Ascending aorta (tissue), 2 donors: ENCODE measurements at regions of chr20 and their contacts with region 1.

Region 1: GRCh38 chr20:17682103-17682888 is at the start of gene RRBP1:
- DNase-seq: peak; percentile 97 to 99
- H3K4me3 ChIP-seq: peak within 1 kb of the TSS; percentile 90 to 93
- H3K27ac ChIP-seq: peak within 1 kb of the TSS; percentile 95 to 97
- H3K4me1 ChIP-seq: peaks cover 4 to 12% of the 10 kb centered on the region in 2 donors
- H3K27me3 ChIP-seq: no peaks in the 10 kb centered on the region
- CTCF ChIP-seq: peak; percentile 60 to 77 (median 76)
- total RNA-seq, gene RRBP1: 101 TPM

Region 2: DNA sequence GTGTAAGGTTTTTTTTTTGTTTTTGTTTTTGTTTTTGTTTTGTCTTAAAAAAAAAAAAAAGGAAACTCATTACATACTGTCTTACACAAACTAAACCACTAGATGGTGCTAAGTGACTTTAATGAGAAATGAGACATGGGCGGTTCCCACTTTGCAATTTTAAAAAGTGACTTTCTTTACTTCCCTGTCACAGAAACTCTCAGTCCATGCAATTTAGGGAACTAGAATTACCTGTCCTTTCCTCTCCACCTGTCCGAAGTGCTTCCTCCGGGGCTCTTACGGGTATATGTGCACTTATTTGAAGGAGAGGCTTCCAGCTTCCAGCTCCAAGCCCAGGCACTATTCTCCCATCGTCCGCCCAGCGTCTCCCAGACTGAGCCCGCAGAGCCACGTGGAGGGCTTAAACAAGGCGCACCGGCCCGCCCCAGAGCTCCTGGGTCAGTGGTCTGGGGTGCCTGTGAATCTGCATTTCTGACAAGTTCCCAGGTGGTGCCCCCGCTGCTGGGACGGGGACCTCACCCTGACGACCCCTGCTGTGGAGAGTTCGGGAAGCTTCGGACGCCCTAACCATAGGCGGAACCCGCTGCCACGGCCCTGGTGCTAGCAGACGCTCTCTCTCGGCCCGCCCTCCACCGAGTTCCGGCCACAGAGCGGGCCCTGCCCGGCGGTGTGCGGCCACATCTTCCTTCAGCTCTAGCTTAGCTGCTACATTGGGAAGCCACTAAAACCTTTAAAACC is 177.2 kb before region 1 on chr20:
- intact Hi-C with region 1: loop called (anchors 5 kb)
- DNase-seq: no peak
- H3K4me3 ChIP-seq: peak overlapping the region; percentile 60 to 65
- H3K27ac ChIP-seq: no peak overlapping the region
- H3K4me1 ChIP-seq: peaks cover 0 to 6% of the 10 kb centered on the region in 2 donors
- H3K27me3 ChIP-seq: no peaks in the 10 kb centered on the region
- CTCF ChIP-seq: peak; percentile 30 to 76 (median 74)

Region 3: GRCh38 chr20:17699931-17700657 is 17.8 kb after region 1 on chr20 and contains the start of gene BANF2:
- intact Hi-C with region 1: no loop called
- DNase-seq: no peak
- H3K4me3 ChIP-seq: no peak within 1 kb of the TSS
- H3K27ac ChIP-seq: no peak within 1 kb of the TSS
- H3K4me1 ChIP-seq: no peaks in the 10 kb centered on the region
- H3K27me3 ChIP-seq: no peaks in the 10 kb centered on the region
- CTCF ChIP-seq: no peak
- total RNA-seq, gene BANF2: not detected

Region 4: GRCh38 chr20:17796091-17796563 is 113.8 kb after region 1 on chr20:
- intact Hi-C with region 1: loop called (anchors 5 kb)
- DNase-seq: peak; percentile 26 to 84
- H3K4me3 ChIP-seq: no peak overlapping the region
- H3K27ac ChIP-seq: peak overlapping the region; percentile 72 to 83
- H3K4me1 ChIP-seq: peaks cover 0 to 26% of the 10 kb centered on the region in 2 donors
- H3K27me3 ChIP-seq: no peaks in the 10 kb centered on the region
- CTCF ChIP-seq: no peak

Region 5: DNA sequence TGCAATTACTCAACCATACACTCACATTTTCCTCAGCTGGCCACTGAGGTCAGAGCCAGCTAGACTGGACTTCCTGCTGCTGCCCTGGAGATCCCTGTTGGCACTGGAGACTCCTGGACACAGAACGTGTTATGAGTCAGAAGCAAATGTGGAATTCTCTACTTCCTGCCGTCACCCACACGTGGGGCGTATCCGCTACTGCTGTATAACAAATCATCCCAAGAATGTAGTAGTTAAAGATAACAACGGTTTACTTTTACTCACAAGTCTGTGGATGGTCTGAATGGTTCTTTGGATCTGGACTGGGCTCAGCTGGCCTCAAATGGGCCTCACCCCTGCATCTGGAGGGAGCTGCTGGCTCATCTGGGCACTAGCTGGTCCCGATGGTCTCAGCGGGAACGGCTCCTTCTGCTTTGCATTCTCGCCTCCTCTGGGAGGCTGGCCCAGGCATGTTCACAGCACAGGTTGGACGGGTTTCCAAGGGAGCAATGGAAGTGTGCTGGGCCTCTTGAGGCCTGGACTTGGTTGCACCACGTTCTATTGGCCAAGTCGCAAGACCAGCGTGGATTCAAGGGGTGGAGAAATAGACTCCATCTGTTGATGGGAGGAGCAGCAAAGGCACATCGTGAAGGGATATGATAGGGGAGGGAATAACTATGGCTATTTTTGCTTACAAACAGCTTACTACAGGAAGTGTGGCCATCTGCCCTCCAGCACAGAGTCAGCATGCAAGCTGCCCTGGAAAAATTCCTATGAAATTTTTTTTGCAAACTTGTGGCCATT is 167.8 kb after region 1 on chr20:
- intact Hi-C with region 1: loop called (anchors 1 kb)
- DNase-seq: peak; percentile 78 to 97
- H3K4me3 ChIP-seq: peak overlapping the region in 1 of 2 donors; percentile 8
- H3K27ac ChIP-seq: peak overlapping the region; percentile 90 to 93
- H3K4me1 ChIP-seq: peaks cover 7 to 14% of the 10 kb centered on the region in 2 donors
- H3K27me3 ChIP-seq: no peaks in the 10 kb centered on the region
- CTCF ChIP-seq: no peak

Region 6: DNA sequence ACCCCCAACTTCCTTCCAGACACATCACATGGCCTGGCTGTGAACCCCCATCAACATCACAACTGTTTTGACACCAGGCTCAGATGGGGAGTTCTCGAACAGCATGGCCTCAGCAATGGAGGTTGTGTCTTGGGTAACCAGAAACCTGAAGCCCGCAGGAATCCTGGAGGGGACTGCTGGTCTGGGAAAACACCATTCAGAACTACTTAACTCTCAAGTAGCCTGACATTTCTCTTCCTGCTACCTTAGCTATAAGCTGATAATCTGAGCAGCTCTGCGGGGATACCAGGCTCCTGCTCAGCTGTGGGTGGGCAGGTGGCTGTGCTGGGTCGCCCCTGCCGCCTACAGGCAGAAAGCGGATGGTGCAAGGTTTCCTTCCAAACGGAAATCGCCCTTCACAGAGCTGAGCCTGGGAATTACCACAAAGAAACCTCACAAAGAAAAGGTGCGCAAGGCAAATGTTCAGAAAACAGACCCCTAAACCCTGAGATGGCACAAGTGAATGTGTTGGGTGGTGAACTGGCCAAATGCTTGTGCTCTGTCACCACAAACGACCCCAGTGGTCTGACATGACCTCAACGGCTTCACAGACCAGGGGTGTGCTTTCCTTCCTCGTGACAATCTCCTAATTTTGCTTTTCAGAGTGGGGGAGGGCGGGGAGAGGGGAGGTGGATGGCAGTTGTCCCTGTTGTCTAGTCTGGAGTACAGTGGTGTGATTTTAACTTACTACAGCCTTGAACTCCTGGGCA is 256.7 kb after region 1 on chr20:
- intact Hi-C with region 1: loop called (anchors 2 kb)
- DNase-seq: peak; percentile 18 to 79
- H3K4me3 ChIP-seq: no peak overlapping the region
- H3K27ac ChIP-seq: peak overlapping the region; percentile 33 to 73
- H3K4me1 ChIP-seq: peaks cover 10 to 30% of the 10 kb centered on the region in 2 donors
- H3K27me3 ChIP-seq: no peaks in the 10 kb centered on the region
- CTCF ChIP-seq: peak; percentile 85 to 92 (median 90)

Region 7: DNA sequence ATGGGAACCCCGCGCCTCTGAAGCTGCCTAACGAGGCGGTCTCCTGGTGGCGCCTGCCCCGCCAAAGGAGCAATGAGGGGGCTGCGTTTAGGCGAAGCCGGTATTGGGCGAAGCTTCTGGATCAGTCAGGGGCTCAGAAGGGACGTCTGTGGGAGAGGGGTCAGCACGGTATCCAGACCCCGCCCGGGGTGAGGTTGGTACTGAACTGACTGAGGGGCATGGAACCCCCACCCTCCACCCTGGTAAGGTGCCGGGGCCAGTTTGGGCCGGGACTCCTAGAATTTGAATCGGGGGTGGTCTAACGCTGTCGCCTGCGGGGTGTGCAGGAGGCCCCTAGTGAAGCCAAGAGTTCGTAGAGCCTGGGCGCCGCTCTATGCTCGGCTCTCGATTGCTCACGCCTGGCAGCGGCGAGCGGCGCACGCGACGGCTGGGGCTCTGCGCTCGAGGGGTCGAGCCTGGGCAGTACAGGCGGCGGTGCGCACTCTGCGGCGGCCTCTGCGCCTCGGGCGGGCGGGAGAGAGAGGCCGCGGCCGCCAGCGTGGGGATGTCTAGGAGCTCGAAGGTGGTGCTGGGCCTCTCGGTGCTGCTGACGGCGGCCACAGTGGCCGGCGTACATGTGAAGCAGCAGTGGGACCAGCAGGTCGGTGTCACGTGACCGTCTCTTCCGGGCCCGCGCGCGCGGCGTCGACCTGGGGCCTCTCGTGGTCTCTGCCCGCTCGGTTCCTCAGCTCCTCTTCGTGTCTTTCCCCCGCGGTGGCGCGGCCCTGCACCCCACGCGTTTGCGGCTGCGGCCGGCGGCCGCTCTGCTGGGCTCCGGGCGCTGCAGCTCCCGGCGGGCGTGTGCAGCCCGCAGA is 455.3 kb after region 1 on chr20 and contains the starts of genes KAT14 and PET117:
- intact Hi-C with region 1: loop called (anchors 5 kb)
- DNase-seq: peak; percentile 36 to 92
- H3K4me3 ChIP-seq: peak within 1 kb of the TSS; percentile 76 to 81
- H3K27ac ChIP-seq: peak within 1 kb of the TSS; percentile 88
- H3K4me1 ChIP-seq: peaks cover 3 to 18% of the 10 kb centered on the region in 2 donors
- H3K27me3 ChIP-seq: no peaks in the 10 kb centered on the region
- CTCF ChIP-seq: no peak
- total RNA-seq, gene KAT14: 1.7 TPM
- total RNA-seq, gene PET117: 37.1 TPM

Region 8: GRCh38 chr20:18276821-18277220 is 594.5 kb after region 1 on chr20:
- intact Hi-C with region 1: no loop called
- DNase-seq: peak in 1 of 2 donors; percentile 67
- H3K4me3 ChIP-seq: no peak overlapping the region
- H3K27ac ChIP-seq: no peak overlapping the region
- H3K4me1 ChIP-seq: no peaks in the 10 kb centered on the region
- H3K27me3 ChIP-seq: no peaks in the 10 kb centered on the region
- CTCF ChIP-seq: peak in 2 of 3 experiments; percentile 55 to 65